Motor neuron (in vitro differentiated cells): ENCODE measurements at regions of chr10 and their contacts with region 1.

Region 1: GRCh38 chr10:29304264-29305030 is 15.6 kb downstream of the LYZL1 start:
- ATAC-seq: peak; percentile 85 to 97 (median 91)
- H3K4me3 ChIP-seq: no peak overlapping the region
- H3K27ac ChIP-seq: no peak overlapping the region
- H3K4me1 ChIP-seq: peaks cover 0 to 6% of the 10 kb centered on the region in 2 donors

Region 2: DNA sequence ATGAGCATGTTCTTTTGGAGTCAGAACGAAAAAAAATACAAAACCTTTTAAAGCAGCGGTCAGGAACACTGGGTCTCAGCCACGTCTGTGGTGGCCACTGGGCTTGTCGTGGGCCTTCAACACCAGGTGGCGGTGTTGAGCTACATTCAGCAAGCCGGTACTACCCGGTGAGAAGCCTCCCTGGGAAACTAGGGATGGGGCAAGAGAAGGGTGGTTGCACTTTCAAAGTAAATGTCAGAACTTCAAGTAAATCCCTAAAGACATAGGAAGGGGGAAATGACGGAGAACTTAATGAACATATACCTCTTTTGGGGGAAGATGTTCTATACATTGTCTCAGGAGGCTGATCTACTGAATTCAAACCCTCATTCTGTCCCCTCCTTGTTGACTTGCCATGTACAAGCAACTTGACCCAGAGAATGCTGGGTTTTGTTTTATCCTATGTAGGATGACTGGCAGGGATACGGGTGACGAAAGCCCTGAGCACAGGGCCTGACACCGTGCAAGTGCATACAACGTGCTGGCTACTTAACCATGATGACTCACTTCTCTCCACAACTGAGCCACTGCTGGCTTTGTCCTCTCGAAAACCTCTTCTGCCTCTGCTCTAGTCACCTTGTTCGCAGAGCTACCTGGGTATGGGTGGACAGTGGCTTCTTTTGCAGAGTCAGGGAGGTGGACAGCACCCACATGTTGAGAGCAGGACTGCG is 676.1 kb before region 1 on chr10:
- in situ Hi-C with region 1: loop called in 2 of 9 experiments (anchors 25 kb)
- ATAC-seq: peak; percentile 91 to 94 (median 92)
- H3K4me3 ChIP-seq: no peak overlapping the region
- H3K27ac ChIP-seq: no peak overlapping the region
- H3K4me1 ChIP-seq: peaks cover 0 to 4% of the 10 kb centered on the region in 2 donors

Region 3: DNA sequence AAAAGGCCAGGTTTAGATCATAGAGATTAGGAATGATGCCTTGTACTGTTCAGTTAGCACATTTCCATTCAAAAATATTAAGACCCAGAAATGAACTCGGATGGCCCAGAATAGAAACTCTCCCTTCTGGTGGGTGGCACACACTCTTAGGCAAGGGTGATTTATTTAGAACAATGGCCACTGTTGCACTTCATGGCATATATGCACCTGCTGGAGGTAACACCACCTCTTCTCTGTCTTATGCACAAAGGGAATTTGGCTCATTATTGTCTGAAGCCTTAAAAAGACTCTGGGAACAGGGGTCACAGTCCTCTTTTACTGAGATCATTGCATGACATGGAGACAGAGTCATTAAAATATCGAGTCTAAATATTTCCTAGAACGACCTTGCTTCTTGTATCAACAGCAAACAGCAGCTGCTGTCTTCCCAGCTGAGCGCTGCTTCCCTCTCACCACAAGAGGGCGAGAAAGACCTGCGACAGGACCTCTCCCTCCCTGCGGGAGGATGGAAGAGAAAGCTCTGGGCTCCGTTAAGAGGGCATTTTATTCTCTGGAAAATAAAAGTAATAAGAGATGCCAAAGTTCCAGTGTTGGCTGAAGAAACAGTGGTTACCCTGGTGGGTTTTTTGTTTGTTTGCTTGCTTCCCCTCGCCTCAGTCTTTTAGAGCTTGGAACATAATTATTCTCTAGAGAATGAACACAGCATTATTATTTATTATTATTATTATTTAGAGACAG is 640.7 kb before region 1 on chr10:
- in situ Hi-C with region 1: loop called in 7 of 9 experiments (anchors 10 to 25 kb)
- ATAC-seq: peak; percentile 48 to 80 (median 69)
- H3K4me3 ChIP-seq: no peak overlapping the region
- H3K27ac ChIP-seq: no peak overlapping the region
- H3K4me1 ChIP-seq: peaks cover 0 to 5% of the 10 kb centered on the region in 2 donors

Region 4: GRCh38 chr10:29239569-29240472 is 64.6 kb before region 1 on chr10:
- in situ Hi-C with region 1: loop called in 1 of 9 experiments (anchors 10 kb)
- ATAC-seq: peak in 3 of 8 experiments; percentile 52 to 93 (median 82)
- H3K4me3 ChIP-seq: no peak overlapping the region
- H3K27ac ChIP-seq: no peak overlapping the region
- H3K4me1 ChIP-seq: peaks cover 8 to 9% of the 10 kb centered on the region in 2 donors